ENCODE measurements at regions of chr17 and their contacts with region 1.

Region 1: DNA sequence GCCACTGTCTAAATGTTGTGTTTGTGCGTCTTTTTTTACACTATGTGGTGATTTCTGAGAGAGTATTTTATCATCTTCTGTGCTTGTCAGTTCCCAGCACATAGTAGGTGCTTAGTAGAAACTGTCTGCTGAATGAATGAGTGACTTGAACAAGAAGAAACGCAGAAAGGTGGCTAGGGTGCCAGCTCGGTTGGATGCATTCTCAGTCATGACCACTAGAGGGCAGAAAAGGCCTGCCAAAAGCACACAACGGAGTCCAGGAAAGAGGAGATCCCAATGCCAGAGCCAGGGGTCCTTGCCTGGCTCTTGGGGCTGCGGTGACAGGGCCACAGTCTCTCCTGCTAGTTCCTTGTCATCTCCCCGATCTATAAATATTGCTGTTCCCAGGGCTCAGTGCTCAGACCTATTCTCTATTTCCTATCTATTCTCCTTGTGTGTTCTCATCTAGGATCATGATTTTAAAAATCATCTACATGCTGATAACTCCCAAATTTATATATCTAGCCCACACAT is 57.3 kb upstream of the CCL1 start:
- DNase-seq: peak; percentile 85

Region 2: DNA sequence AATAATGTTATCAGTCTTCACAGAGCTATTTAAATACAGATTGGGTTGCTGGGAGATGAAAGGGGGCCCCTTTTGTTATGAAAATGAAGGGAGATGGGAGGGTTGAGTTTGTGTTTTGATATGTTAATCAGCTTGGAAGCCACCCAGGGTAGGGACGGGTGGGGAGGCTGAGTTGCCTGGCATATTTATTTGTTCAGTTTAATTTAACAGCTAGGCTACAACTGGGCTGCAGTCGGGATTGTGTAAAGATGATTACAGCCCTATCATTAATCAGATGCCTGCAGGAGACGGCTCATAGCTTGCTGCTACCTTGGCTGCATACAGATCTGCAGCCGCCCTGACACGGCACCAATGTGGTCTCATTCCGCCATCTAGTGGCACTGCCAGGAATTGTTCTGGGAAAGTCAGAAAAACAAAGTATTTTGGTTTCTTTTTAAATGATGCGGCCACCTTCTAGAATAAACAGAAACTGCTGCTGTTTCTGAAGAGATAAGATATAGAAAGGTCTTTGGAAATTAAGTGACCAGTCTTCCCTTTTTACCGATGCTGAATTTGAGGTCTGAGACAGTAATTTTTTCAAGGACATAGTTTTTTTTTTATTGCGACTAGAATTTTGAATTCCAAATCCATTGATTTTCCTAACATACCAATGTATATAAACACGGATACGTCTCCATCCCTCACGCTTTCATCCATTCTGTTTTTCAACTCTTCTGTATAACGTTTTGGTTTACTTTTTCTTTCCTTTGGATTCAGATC is 669.2 kb before region 1 on chr17:
- in situ Hi-C with region 1: no loop called
- DNase-seq: peak; percentile 59

Region 3: GRCh38 chr17:34562387-34562786 is 142.1 kb after region 1 on chr17:
- in situ Hi-C with region 1: no loop called
- DNase-seq: no peak

Region 4: GRCh38 chr17:34665150-34665806 is 245.0 kb after region 1 on chr17:
- in situ Hi-C with region 1: no loop called
- DNase-seq: no peak

Region 5: GRCh38 chr17:35119368-35120165 is 699.3 kb after region 1 on chr17 and contains the start of gene RAD51D:
- in situ Hi-C with region 1: loop called (anchors 25 kb)
- DNase-seq: peak; percentile 93